Esophagus squamous epithelium (tissue), 5 donors: ENCODE measurements at regions of chr3 and their contacts with region 1.

Region 1: GRCh38 chr3:42880601-42881451 is 5.1 kb upstream of the CYP8B1 start:
- DNase-seq: peak; percentile 22
- H3K4me3 ChIP-seq: peak overlapping the region; percentile 54 to 86 (median 60)
- H3K27ac ChIP-seq: peak overlapping the region; percentile 64 to 86 (median 79)
- H3K4me1 ChIP-seq: peaks cover 4 to 12% (median 9%) of the 10 kb centered on the region in 3 donors
- H3K27me3 ChIP-seq: no peaks in the 10 kb centered on the region
- CTCF ChIP-seq: peak; percentile 88 to 96 (median 93)
- POLR2A ChIP-seq: no peak

Region 2: GRCh38 chr3:41846850-41847249 is 1034.0 kb before region 1 on chr3:
- intact Hi-C with region 1: no loop called
- DNase-seq: no peak
- H3K4me3 ChIP-seq: no peak overlapping the region
- H3K27ac ChIP-seq: no peak overlapping the region
- H3K4me1 ChIP-seq: no peaks in the 10 kb centered on the region
- H3K27me3 ChIP-seq: no peaks in the 10 kb centered on the region
- CTCF ChIP-seq: no peak
- POLR2A ChIP-seq: no peak

Region 3: GRCh38 chr3:42814914-42815507 is 65.8 kb before region 1 on chr3:
- intact Hi-C with region 1: no loop called
- DNase-seq: no peak
- H3K4me3 ChIP-seq: no peak overlapping the region
- H3K27ac ChIP-seq: peak overlapping the region; percentile 64 to 82 (median 70)
- H3K4me1 ChIP-seq: peaks cover 9 to 35% (median 13%) of the 10 kb centered on the region in 3 donors
- H3K27me3 ChIP-seq: no peaks in the 10 kb centered on the region
- CTCF ChIP-seq: no peak
- POLR2A ChIP-seq: no peak

Region 4: DNA sequence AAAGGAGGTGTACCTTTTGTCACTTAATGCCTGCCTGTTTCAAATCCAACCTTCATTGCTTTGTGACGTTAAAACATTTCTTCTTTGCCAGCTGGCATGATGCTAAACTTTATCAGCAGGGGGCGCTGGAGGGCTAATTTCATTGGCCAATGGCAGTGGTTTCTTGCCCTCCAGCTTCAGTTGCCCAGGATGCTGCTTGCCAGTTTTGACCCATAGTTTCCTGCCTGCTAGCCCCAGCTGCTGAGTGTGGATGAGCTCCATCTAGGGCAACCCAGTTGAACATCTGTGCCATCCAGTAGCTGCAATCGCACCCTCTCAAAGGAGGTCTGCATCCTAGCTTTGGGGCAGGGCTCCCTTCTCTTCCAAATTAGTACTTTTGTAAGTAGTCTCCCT is 49.5 kb before region 1 on chr3:
- intact Hi-C with region 1: loop called (anchors 5 kb)
- DNase-seq: no peak
- H3K4me3 ChIP-seq: no peak overlapping the region
- H3K27ac ChIP-seq: no peak overlapping the region
- H3K4me1 ChIP-seq: peaks cover 0 to 27% (median 13%) of the 10 kb centered on the region in 3 donors
- H3K27me3 ChIP-seq: no peaks in the 10 kb centered on the region
- CTCF ChIP-seq: peak; percentile 53 to 75 (median 72)
- POLR2A ChIP-seq: no peak